HepG2 (cell line): ENCODE measurements at regions of chr13 and their contacts with region 1.

Region 1: GRCh38 chr13:106536244-106537034 is 977 bp upstream of the EFNB2 start:
- DNase-seq: peak; percentile 47
- ATAC-seq: peak; percentile 74
- H3K4me3 ChIP-seq: peak overlapping the region; percentile 38 to 75 (median 51)
- H3K27ac ChIP-seq: no peak overlapping the region
- H3K4me1 ChIP-seq: peaks cover 15% of the 10 kb centered on the region
- H3K27me3 ChIP-seq: peaks cover 2 to 16% of the 10 kb centered on the region in 2 experiments; a peak in 2 of 5 replicates
- CTCF ChIP-seq: peak; percentile 95
- EP300 ChIP-seq: no peak
- POLR2A ChIP-seq: no peak
- RAD21 ChIP-seq: peak; percentile 86

Region 2: GRCh38 chr13:105410602-105411001 is 1125.8 kb before region 1 on chr13:
- CTCF ChIA-PET with region 1: interaction called, 3 read pairs
- POLR2A ChIA-PET with region 1: no interaction called
- in situ Hi-C with region 1: loop called (anchors 25 kb)
- intact Hi-C with region 1: no loop called
- DNase-seq: peak; percentile 7
- ATAC-seq: peak; percentile 61; the same call in 2 of the 3 replicates
- H3K4me3 ChIP-seq: no peak overlapping the region
- H3K27ac ChIP-seq: no peak overlapping the region
- H3K4me1 ChIP-seq: no peaks in the 10 kb centered on the region
- H3K27me3 ChIP-seq: no peaks in the 10 kb centered on the region
- CTCF ChIP-seq: peak; percentile 66
- EP300 ChIP-seq: no peak
- POLR2A ChIP-seq: no peak
- RAD21 ChIP-seq: no peak

Region 3: DNA sequence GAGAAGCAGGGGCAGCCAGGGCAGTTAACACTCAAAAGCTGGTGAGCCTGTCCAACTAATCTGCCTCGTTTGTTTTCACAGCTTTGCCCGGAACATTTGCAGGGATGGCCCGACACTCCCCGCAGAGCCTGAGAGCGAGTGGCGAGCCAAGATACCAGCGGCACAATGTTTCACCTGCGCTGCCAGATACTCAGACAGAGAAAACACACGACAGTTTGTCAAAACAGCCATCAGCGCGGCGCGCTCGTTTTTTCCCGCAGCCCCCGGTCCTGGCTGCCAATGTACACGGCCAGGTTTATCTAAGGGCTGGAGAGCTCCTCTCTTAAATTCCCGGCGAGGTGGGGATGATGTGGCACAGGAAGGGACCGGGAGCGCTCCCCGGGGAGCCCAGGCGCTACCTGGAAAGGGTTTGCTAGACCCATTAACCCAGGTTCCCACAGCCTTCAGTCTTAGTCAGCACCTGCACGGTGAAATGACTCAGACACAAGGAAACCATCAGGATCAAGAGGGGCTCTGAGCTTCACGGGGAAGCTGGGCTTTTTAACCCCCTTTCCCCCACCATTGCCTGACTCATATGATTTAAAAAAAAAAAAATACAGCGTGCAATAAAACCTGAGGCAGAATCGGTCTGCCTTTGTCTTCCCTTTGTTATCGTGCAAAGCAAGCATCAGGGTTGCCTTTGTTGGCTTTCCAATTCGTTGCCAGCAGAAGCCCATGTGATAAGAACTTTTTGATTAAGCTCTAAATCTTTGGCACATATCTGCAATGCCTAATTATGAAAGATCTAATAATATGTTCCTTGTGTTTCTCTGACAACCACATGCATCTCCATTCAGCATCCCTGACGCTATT is 187.1 kb before region 1 on chr13:
- CTCF ChIA-PET with region 1: no interaction called
- POLR2A ChIA-PET with region 1: no interaction called
- in situ Hi-C with region 1: no loop called
- intact Hi-C with region 1: no loop called
- DNase-seq: no peak
- ATAC-seq: no peak
- H3K4me3 ChIP-seq: no peak overlapping the region
- H3K27ac ChIP-seq: no peak overlapping the region
- H3K4me1 ChIP-seq: no peaks in the 10 kb centered on the region
- H3K27me3 ChIP-seq: peaks cover 0 to 13% of the 10 kb centered on the region in 2 experiments; a peak in 2 of 5 replicates
- CTCF ChIP-seq: no peak
- EP300 ChIP-seq: no peak
- POLR2A ChIP-seq: no peak
- RAD21 ChIP-seq: no peak

Region 4: DNA sequence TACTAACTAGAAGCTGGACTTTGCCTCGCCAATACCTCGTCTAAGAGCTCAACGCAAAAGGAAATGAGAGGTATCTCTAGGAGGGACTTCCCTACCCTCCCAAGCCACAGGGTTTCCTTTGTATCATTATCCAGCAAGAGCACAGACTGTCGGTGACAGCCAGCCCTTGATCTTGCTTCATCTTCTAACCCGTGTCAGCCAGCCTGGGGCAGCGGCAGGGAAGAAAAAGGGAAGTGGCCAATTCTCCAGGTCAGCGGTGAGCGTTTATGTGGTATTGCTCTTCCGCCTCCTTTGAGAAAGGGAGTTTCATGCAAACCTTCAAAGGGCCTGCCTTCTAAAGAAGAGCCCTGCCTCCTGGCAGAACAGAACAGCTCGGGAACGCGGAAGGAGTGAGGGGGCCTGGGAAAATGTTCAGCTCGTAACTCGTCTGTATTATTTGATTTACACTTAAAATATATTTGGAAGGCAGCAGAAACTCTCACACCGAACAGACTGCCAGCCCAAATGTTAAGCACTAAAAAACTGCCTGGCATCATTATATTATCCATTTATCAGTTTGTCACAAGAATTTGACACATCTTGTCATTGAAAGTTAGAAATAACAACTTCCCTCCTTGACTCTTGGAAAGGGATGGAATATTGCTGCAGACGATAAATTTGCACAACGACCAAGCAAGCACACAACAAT is 42.8 kb before region 1 on chr13:
- CTCF ChIA-PET with region 1: no interaction called
- POLR2A ChIA-PET with region 1: no interaction called
- in situ Hi-C with region 1: no loop called
- intact Hi-C with region 1: no loop called
- DNase-seq: no peak
- ATAC-seq: no peak
- H3K4me3 ChIP-seq: no peak overlapping the region
- H3K27ac ChIP-seq: no peak overlapping the region
- H3K4me1 ChIP-seq: no peaks in the 10 kb centered on the region
- H3K27me3 ChIP-seq: no peaks in the 10 kb centered on the region
- CTCF ChIP-seq: no peak
- EP300 ChIP-seq: no peak
- POLR2A ChIP-seq: no peak
- RAD21 ChIP-seq: no peak

Region 5: GRCh38 chr13:106619688-106620555 is 83.5 kb after region 1 on chr13:
- CTCF ChIA-PET with region 1: no interaction called
- POLR2A ChIA-PET with region 1: no interaction called
- in situ Hi-C with region 1: no loop called
- intact Hi-C with region 1: loop called (anchors 2 kb)
- DNase-seq: peak; percentile 40
- ATAC-seq: peak; percentile 99
- H3K4me3 ChIP-seq: no peak overlapping the region
- H3K27ac ChIP-seq: no peak overlapping the region
- H3K4me1 ChIP-seq: no peaks in the 10 kb centered on the region
- H3K27me3 ChIP-seq: peaks cover 2 to 29% of the 10 kb centered on the region in 2 experiments; a peak in 3 of 5 replicates
- CTCF ChIP-seq: peak; percentile 84
- EP300 ChIP-seq: no peak
- POLR2A ChIP-seq: no peak
- RAD21 ChIP-seq: no peak

Region 6: DNA sequence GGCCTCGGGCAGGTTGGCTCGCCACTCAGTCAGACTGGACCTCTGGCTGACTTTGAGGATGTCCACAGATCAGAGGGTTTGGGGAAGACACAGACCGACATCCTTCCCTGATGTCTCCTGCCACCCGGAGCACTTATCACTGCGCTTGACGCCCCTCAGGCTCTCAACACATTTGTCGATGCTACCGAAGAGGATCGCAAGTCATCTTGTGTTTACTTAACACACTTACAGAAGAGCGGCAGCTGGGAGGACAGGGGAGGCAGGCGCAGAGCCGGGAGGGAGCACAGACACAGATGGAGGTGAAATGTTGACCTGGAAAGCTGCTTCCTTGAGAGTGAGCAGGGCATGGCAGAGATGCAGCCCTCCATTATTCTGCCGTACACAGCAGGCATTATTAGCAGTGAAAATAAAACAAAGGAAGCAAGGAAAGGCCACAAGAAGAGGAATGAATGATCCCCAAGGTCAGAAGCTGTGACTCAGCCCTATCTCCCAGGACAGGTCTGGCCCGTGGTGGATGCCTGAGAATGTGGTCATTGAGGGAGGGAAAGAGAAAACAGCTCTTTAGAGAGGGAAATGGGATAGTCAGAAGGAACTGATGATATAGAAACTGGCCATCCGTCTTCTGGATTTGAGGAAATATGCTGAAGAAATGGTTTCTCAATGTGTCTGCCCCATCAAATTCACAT is 581.0 kb after region 1 on chr13:
- CTCF ChIA-PET with region 1: no interaction called
- POLR2A ChIA-PET with region 1: no interaction called
- in situ Hi-C with region 1: loop called (anchors 10 kb)
- intact Hi-C with region 1: loop called (anchors 5 kb)
- DNase-seq: peak; percentile 2
- ATAC-seq: no peak
- H3K4me3 ChIP-seq: no peak overlapping the region
- H3K27ac ChIP-seq: no peak overlapping the region
- H3K4me1 ChIP-seq: peaks cover 45% of the 10 kb centered on the region
- H3K27me3 ChIP-seq: no peaks in the 10 kb centered on the region
- CTCF ChIP-seq: no peak
- EP300 ChIP-seq: no peak
- POLR2A ChIP-seq: no peak
- RAD21 ChIP-seq: no peak